Endothelial cell of umbilical vein (primary cell): ENCODE measurements at regions of chr19 and their contacts with region 1.

Region 1: GRCh38 chr19:45817010-45817724 is 2.1 kb upstream of the RSPH6A start:
- DNase-seq: peak; percentile 95
- H3K4me3 ChIP-seq: no peak overlapping the region
- H3K27ac ChIP-seq: no peak overlapping the region
- H3K4me1 ChIP-seq: peaks cover 22% of the 10 kb centered on the region
- H3K27me3 ChIP-seq: no peaks in the 10 kb centered on the region
- CTCF ChIP-seq: peak; percentile 98 to 100
- POLR2A ChIP-seq: peak; percentile 28

Region 2: GRCh38 chr19:45705115-45705514 is 112.1 kb before region 1 on chr19:
- CTCF ChIA-PET with region 1: no interaction called
- POLR2A ChIA-PET with region 1: no interaction called
- dilution Hi-C with region 1: no loop called
- intact Hi-C with region 1: no loop called
- DNase-seq: no peak
- H3K4me3 ChIP-seq: no peak overlapping the region
- H3K27ac ChIP-seq: no peak overlapping the region
- H3K4me1 ChIP-seq: no peaks in the 10 kb centered on the region
- H3K27me3 ChIP-seq: no peaks in the 10 kb centered on the region
- CTCF ChIP-seq: no peak
- POLR2A ChIP-seq: no peak

Region 3: GRCh38 chr19:45753546-45753945 is 63.6 kb before region 1 on chr19:
- CTCF ChIA-PET with region 1: no interaction called
- POLR2A ChIA-PET with region 1: no interaction called
- dilution Hi-C with region 1: no loop called
- intact Hi-C with region 1: no loop called
- DNase-seq: no peak
- H3K4me3 ChIP-seq: no peak overlapping the region
- H3K27ac ChIP-seq: no peak overlapping the region
- H3K4me1 ChIP-seq: no peaks in the 10 kb centered on the region
- H3K27me3 ChIP-seq: no peaks in the 10 kb centered on the region
- CTCF ChIP-seq: no peak
- POLR2A ChIP-seq: no peak

Region 4: DNA sequence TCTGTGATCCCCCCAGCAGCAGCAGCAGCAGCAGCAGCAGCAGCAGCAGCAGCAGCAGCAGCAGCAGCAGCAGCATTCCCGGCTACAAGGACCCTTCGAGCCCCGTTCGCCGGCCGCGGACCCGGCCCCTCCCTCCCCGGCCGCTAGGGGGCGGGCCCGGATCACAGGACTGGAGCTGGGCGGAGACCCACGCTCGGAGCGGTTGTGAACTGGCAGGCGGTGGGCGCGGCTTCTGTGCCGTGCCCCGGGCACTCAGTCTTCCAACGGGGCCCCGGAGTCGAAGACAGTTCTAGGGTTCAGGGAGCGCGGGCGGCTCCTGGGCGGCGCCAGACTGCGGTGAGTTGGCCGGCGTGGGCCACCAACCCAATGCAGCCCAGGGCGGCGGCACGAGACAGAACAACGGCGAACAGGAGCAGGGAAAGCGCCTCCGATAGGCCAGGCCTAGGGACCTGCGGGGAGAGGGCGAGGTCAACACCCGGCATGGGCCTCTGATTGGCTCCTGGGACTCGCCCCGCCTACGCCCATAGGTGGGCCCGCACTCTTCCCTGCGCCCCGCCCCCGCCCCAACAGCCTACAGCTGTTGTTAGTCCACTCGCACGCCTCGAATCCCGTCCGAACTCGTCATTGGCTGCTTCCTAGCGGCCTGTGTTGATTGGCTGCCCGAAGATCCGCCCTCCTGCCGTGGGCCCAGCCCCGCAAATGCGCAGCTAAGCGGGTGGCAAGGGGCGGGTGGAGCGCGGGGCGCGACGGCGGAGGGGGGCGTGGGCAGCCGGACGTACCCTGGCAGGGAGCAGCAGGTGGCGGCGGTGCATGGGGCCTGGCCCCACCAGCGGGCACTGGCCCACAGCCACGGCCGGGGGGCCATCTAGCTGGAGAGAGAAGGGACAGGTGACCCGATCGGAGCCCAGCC is 46.7 kb before region 1 on chr19:
- CTCF ChIA-PET with region 1: interaction called, 32 read pairs
- POLR2A ChIA-PET with region 1: interaction called, 6 read pairs
- dilution Hi-C with region 1: no loop called
- intact Hi-C with region 1: loop called (anchors 1 kb)
- DNase-seq: peak; percentile 98
- H3K4me3 ChIP-seq: peak overlapping the region; percentile 13 to 49 (median 45)
- H3K27ac ChIP-seq: peak overlapping the region; percentile 21
- H3K4me1 ChIP-seq: peaks cover 14% of the 10 kb centered on the region
- H3K27me3 ChIP-seq: no peaks in the 10 kb centered on the region
- CTCF ChIP-seq: peak; percentile 92 to 98
- POLR2A ChIP-seq: peak; percentile 70

Region 5: DNA sequence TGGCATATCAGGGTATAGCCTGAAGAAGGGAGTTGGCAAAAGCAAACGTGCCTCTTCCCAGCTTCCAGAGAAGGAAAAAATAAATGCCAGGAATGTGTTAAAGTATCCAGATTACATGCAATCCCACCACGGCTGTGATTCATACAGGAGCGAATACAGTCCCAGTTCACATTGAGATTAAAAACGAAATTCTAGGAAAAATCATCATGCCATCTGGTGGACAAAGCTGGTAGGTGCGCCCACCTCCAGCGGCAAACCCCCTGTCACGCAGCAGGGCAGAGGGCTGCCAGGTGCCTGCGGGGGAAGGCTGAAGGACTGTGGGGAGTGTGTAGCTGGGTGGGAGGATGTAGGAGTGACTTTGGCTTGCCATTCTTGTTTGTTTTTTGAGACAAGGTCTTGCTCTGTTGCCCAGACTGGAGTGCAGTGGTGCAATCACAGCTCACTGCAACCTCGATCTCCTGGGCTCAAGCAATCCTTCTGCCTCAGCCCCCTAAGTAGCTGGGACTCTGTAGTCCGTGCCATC is 18.1 kb before region 1 on chr19:
- CTCF ChIA-PET with region 1: interaction called, 38 read pairs
- POLR2A ChIA-PET with region 1: no interaction called
- dilution Hi-C with region 1: no loop called
- intact Hi-C with region 1: no loop called
- DNase-seq: peak; percentile 79
- H3K4me3 ChIP-seq: no peak overlapping the region
- H3K27ac ChIP-seq: no peak overlapping the region
- H3K4me1 ChIP-seq: no peaks in the 10 kb centered on the region
- H3K27me3 ChIP-seq: no peaks in the 10 kb centered on the region
- CTCF ChIP-seq: peak; percentile 70 to 77
- POLR2A ChIP-seq: no peak

Region 6: GRCh38 chr19:45834970-45835369 is 17.8 kb after region 1 on chr19:
- CTCF ChIA-PET with region 1: interaction called, 20 read pairs
- POLR2A ChIA-PET with region 1: interaction called, 3 read pairs
- dilution Hi-C with region 1: no loop called
- intact Hi-C with region 1: no loop called
- DNase-seq: no peak
- H3K4me3 ChIP-seq: no peak overlapping the region
- H3K27ac ChIP-seq: no peak overlapping the region
- H3K4me1 ChIP-seq: no peaks in the 10 kb centered on the region
- H3K27me3 ChIP-seq: no peaks in the 10 kb centered on the region
- CTCF ChIP-seq: no peak
- POLR2A ChIP-seq: no peak

Region 7: DNA sequence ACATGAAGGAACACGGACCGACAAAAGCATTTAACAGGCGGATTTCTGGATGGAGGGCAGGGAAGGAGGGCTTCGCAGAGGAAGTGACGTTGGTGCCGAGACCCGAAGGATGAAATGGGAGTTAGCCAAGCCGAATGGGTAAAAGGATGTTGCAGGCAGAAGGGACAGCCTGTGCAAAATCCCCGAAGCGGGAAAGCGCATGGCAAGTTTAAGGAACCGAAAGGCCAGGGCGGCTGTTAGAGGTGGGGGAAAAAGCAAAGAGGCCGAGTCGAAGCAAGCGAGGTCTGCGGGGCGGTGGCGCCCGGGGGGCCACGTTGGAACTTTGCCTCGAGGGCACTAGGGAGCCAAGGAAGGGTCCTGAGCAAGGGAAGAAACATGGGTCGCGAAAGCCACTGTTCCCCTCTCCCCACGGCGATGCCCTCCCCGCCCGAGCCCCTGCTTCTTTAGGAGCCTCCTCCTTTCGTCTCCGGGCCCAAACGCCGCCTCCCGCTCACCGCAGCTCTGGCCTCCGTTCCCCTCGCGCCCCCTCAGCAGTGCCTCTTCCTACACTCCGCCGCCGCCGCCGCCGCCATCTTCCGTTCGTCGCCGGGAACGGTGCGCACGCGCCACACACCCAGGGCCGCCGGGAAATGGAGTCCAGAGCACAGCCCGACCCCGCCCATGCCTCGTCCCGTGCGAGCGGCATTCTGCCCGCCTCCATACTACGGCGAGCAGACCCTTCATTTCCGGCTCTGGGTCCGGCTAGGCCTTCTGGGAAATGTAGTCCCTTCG is 45.6 kb after region 1 on chr19 and contains the start of gene SYMPK:
- CTCF ChIA-PET with region 1: interaction called, 9 read pairs
- POLR2A ChIA-PET with region 1: no interaction called
- dilution Hi-C with region 1: no loop called
- intact Hi-C with region 1: loop called (anchors 1 kb)
- DNase-seq: peak; percentile 99
- H3K4me3 ChIP-seq: peak within 1 kb of the TSS; percentile 49 to 90 (median 86)
- H3K27ac ChIP-seq: peak within 1 kb of the TSS; percentile 53
- H3K4me1 ChIP-seq: peaks cover 4% of the 10 kb centered on the region
- H3K27me3 ChIP-seq: peaks cover 20 to 22% of the 10 kb centered on the region in 2 experiments
- CTCF ChIP-seq: no peak
- POLR2A ChIP-seq: peak; percentile 90
- total RNA-seq, gene SYMPK: 94.5 and 95.7 TPM in 2 replicates

Region 8: GRCh38 chr19:45994989-45995714 is 178.0 kb after region 1 on chr19 and contains the start of gene CCDC61:
- CTCF ChIA-PET with region 1: interaction called, 4 read pairs
- POLR2A ChIA-PET with region 1: no interaction called
- dilution Hi-C with region 1: no loop called
- intact Hi-C with region 1: loop called (anchors 5 kb)
- DNase-seq: peak; percentile 100
- H3K4me3 ChIP-seq: peak within 1 kb of the TSS; percentile 69 to 99 (median 95)
- H3K27ac ChIP-seq: peak within 1 kb of the TSS; percentile 64
- H3K4me1 ChIP-seq: peaks cover 10% of the 10 kb centered on the region
- H3K27me3 ChIP-seq: peaks cover 0 to under 1% of the 10 kb centered on the region in 2 experiments
- CTCF ChIP-seq: no peak
- POLR2A ChIP-seq: peak; percentile 90
- total RNA-seq, gene CCDC61: 14.8 and 20.1 TPM in 2 replicates

Region 9: DNA sequence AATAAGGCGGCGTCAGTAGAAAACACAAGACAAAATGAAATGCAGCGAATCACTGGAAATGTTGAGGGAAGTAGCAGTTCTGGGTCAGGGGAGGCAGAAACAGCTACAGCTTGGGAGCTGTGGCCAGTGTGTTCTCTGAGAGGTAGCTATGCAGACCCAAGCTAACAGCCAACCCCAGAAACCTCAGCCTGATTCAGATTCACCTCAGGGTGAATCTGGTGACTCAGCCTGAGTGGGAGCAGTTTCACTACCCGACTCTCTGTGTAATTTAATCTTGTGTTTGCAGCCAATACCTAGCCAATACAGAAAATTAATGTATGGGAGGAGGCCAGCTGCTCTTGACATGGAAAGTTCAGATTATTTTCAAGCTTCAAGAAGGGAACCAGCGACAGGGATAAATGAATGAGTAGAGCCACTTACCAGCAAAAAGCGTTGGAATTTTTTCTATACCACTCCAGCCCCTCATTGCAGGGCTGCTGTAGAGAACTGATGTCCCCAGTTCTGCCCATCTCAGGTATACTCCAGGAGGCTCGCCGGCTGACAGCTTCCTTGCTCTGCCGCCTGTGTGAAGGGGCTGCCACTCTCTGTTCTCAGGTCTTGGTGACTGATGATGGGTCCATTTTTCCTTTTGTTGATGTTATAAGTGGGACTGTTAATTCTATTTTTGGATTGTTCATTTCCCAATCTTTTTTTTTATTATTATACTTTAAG is 298.4 kb after region 1 on chr19:
- CTCF ChIA-PET with region 1: no interaction called
- POLR2A ChIA-PET with region 1: no interaction called
- dilution Hi-C with region 1: no loop called
- intact Hi-C with region 1: no loop called
- DNase-seq: no peak
- H3K4me3 ChIP-seq: no peak overlapping the region
- H3K27ac ChIP-seq: no peak overlapping the region
- H3K4me1 ChIP-seq: no peaks in the 10 kb centered on the region
- H3K27me3 ChIP-seq: peaks cover 32 to 57% of the 10 kb centered on the region in 2 experiments
- CTCF ChIP-seq: no peak
- POLR2A ChIP-seq: no peak

Region 10: DNA sequence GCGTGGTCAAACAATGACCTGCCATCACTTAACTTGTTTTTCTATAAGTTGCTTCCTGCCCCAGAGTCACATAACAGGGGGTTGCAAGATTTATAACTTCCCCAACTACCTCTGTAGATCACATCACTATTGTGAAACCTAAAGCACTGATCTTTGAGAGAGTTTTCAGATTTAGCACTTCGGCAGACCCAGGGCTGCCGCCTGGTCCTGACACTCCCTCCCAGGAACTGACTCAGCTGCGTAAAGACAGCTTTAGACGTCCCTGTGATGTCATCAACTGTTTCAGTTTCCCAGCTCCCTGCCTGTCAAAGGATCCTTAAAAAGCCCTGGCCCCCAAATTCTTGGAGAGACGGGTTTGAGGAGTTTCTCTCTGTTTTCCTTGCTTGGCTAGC is 364.2 kb after region 1 on chr19:
- CTCF ChIA-PET with region 1: no interaction called
- POLR2A ChIA-PET with region 1: no interaction called
- dilution Hi-C with region 1: no loop called
- intact Hi-C with region 1: no loop called
- DNase-seq: no peak
- H3K4me3 ChIP-seq: no peak overlapping the region
- H3K27ac ChIP-seq: no peak overlapping the region
- H3K4me1 ChIP-seq: no peaks in the 10 kb centered on the region
- H3K27me3 ChIP-seq: peaks cover 4 to 6% of the 10 kb centered on the region in 2 experiments
- CTCF ChIP-seq: no peak
- POLR2A ChIP-seq: no peak